ENCODE measurements at regions of chr2 and their contacts with region 1.

Region 1: DNA sequence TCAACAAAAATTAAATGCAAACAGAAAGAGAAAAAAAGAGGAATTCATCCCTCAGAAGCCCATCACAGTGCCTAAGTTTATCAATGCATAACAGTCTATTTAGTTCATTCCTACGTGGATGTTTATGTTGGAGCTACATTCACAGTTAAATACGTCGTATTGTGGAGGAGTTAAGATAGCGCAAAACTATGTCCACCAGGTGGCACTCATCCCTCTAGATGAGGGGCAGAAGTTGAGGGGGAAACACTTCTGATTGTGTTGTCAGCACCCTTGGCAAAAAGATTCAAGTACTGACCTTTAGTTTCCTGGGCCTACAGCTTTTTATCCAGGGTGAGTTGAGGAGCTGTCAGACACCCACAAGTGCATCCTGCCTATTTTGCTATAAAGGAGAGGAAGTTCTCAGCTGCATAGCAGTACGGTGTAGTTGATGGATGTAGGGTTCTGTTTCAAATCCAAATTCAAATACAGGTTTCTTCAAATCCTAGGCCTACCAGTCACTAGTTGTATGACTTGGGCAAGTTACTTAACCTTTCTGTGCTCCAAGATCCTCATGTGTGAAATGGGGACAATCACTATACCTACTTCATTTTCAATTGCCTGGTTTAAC is 26.8 kb upstream of the MYO1B start:
- DNase-seq: peak; percentile 85
- ATAC-seq: peak; percentile 90
- H3K4me3 Mint-ChIP-seq: no peak overlapping the region
- H3K27ac Mint-ChIP-seq: no peak overlapping the region
- H3K4me1 Mint-ChIP-seq: peaks cover 29% of the 10 kb centered on the region
- H3K27me3 Mint-ChIP-seq: no peaks in the 10 kb centered on the region
- CTCF ChIP-seq: peak; percentile 74

Region 2: DNA sequence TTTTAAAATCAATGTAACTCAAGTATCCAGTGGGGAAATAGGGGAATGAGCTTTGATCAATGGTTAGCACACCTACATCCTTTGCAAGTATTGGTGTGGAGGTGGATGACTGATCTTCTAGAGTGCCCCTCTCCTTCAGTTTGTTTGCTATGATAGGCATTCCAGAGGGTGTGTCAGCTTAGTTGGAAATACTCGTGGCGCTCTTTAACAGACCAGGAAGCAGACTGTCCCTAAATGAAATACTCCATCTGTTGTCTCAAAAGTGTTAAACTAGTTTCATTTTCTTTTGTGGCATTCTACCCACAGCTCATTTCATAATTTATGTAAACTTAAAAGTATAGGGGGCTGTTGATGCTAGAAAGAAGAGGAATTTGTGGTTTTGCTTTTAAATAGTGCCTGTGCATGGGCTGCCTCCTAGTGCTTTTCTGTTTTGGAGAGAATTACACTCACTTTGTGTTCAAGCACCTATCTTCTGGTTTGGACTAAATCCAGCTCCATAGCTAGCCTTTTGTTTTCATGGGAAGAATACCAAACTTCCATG is 270.6 kb before region 1 on chr2:
- CTCF ChIA-PET with region 1: no interaction called
- POLR2A ChIA-PET with region 1: no interaction called
- intact Hi-C with region 1: no loop called
- DNase-seq: peak; percentile 36
- ATAC-seq: peak; percentile 81
- H3K4me3 Mint-ChIP-seq: no peak overlapping the region
- H3K27ac Mint-ChIP-seq: peak overlapping the region; percentile 70
- H3K4me1 Mint-ChIP-seq: peaks cover 22% of the 10 kb centered on the region
- H3K27me3 Mint-ChIP-seq: no peaks in the 10 kb centered on the region
- CTCF ChIP-seq: no peak

Region 3: GRCh38 chr2:191158193-191158592 is 60.2 kb before region 1 on chr2:
- CTCF ChIA-PET with region 1: interaction called, 16 read pairs
- POLR2A ChIA-PET with region 1: no interaction called
- intact Hi-C with region 1: no loop called
- DNase-seq: no peak
- ATAC-seq: no peak
- H3K4me3 Mint-ChIP-seq: no peak overlapping the region
- H3K27ac Mint-ChIP-seq: no peak overlapping the region
- H3K4me1 Mint-ChIP-seq: peaks cover 19% of the 10 kb centered on the region
- H3K27me3 Mint-ChIP-seq: no peaks in the 10 kb centered on the region
- CTCF ChIP-seq: no peak

Region 4: DNA sequence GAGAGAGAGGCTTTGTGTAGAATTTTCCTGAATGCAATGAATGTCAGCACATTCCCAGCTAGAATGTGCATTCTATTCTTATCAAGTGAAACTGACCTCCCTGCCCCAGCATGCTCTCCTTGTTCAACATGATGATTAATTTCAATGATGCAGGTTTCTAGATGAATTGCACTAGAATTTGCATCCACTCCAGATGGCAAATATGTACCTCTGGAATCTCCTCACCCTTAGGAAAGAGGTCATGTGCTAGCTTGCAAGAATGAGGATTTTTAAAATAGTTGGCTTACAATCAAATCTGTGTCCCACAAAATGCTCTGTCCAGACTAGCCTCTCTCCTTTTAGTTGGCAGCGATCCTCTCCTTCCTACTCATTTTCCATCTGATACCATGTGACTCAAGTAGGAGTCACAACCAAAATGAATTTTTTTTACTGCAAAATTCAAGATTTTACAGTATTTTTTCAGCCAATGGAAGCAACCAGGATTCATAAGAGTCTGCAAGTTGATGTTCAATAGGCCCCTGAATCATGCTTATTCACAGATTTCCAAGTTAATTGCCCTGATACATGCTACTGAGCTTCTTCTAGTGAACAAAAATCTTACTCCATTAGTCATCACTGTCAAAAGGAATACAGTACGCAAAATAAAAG is 46.6 kb before region 1 on chr2:
- CTCF ChIA-PET with region 1: interaction called, 30 read pairs
- POLR2A ChIA-PET with region 1: no interaction called
- intact Hi-C with region 1: no loop called
- DNase-seq: no peak
- ATAC-seq: peak; percentile 22
- H3K4me3 Mint-ChIP-seq: no peak overlapping the region
- H3K27ac Mint-ChIP-seq: peak overlapping the region; percentile 52
- H3K4me1 Mint-ChIP-seq: peaks cover 70% of the 10 kb centered on the region
- H3K27me3 Mint-ChIP-seq: no peaks in the 10 kb centered on the region
- CTCF ChIP-seq: no peak

Region 5: GRCh38 chr2:191202881-191203397 is 15.5 kb before region 1 on chr2:
- CTCF ChIA-PET with region 1: interaction called, 55 read pairs
- POLR2A ChIA-PET with region 1: interaction called, 4 read pairs
- intact Hi-C with region 1: no loop called
- DNase-seq: peak; percentile 61
- ATAC-seq: peak; percentile 43
- H3K4me3 Mint-ChIP-seq: peak overlapping the region; percentile 19
- H3K27ac Mint-ChIP-seq: peak overlapping the region; percentile 83
- H3K4me1 Mint-ChIP-seq: peaks cover 55% of the 10 kb centered on the region
- H3K27me3 Mint-ChIP-seq: no peaks in the 10 kb centered on the region
- CTCF ChIP-seq: no peak

Region 6: GRCh38 chr2:191245046-191245868 is 26.9 kb after region 1 on chr2 and contains the start of gene MYO1B:
- CTCF ChIA-PET with region 1: interaction called, 26 read pairs
- POLR2A ChIA-PET with region 1: no interaction called
- intact Hi-C with region 1: no loop called
- DNase-seq: peak; percentile 78
- ATAC-seq: peak; percentile 83
- H3K4me3 Mint-ChIP-seq: peak within 1 kb of the TSS; percentile 83
- H3K27ac Mint-ChIP-seq: peak within 1 kb of the TSS; percentile 67
- H3K4me1 Mint-ChIP-seq: peaks cover 18% of the 10 kb centered on the region
- H3K27me3 Mint-ChIP-seq: peaks cover 6% of the 10 kb centered on the region
- CTCF ChIP-seq: peak; percentile 52
- total RNA-seq, gene MYO1B: 43.2 to 44.8 TPM

Measured in activated CD8-positive, alpha-beta T cell treated with anti-CD3 and anti-CD28 coated beads for 36 hours (primary cell).